PC-3 (cell line): ENCODE measurements at regions of chr6 and their contacts with region 1.

Region 1: DNA sequence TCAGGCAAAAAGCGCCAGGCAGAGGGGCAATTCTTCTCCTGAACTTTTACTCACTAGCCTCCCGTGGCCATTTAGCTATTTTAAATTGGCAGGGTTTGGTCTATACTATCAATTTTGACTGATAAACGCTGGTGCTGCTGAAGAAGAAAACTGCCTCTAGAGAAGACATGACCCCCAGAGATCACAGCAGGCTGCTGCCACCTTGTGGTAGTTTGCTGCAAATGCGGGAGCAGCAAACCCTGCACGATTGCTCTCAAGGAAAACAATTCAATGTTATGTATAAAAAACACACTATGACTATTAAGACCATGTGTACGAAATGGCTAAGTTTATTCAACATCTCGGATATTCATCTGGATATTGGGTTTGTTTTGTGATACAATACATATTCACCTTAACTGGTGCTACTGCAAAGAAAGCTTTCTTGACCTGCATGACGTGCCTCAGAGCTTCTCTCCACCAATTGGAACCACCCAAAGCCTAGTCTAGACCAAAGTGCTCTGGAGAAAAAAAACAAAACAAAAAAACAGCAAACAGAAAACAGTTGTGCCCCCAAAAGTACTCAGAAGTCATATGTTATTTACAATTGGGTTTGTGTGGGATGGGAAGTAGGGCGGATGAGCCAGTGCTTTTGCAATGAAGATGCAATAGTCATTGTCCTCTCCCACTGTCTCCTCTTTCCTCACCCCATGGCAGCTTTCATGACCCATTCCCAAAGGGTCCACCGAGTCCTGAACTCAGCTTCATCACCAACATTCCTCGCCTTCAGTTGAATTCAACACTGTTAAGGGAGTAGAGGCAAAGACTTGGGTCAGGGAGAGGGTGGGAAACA is 19.6 kb upstream of the IL17F start:
- DNase-seq: peak; percentile 76
- ATAC-seq: peak; percentile 62
- H3K4me3 ChIP-seq: no peak overlapping the region
- H3K27ac ChIP-seq: no peak overlapping the region
- H3K4me1 ChIP-seq: peaks cover 15% of the 10 kb centered on the region
- H3K27me3 ChIP-seq: no peaks in the 10 kb centered on the region
- CTCF ChIP-seq: peak; percentile 94

Region 2: GRCh38 chr6:52233975-52234823 is 29.7 kb before region 1 on chr6:
- CTCF ChIA-PET with region 1: interaction called, 3 read pairs
- POLR2A ChIA-PET with region 1: no interaction called
- intact Hi-C with region 1: loop called (anchors 2 kb)
- DNase-seq: peak; percentile 90
- ATAC-seq: peak; percentile 100
- H3K4me3 ChIP-seq: peak overlapping the region; percentile 40; the same call in 1 of the 2 replicates
- H3K27ac ChIP-seq: no peak overlapping the region
- H3K4me1 ChIP-seq: peaks cover 6% of the 10 kb centered on the region; the same call in 1 of the 2 replicates
- H3K27me3 ChIP-seq: peaks cover 19% of the 10 kb centered on the region
- CTCF ChIP-seq: peak; percentile 83